Dorsolateral prefrontal cortex (tissue), 120 donors: ENCODE measurements at regions of chr16 and their contacts with region 1.

Region 1: GRCh38 chr16:87874639-87875465 is 5.5 kb upstream of the SLC7A5 start:
- DNase-seq: no peak
- H3K4me3 ChIP-seq: no peak overlapping the region
- H3K27ac ChIP-seq: no peak overlapping the region
- H3K27me3 ChIP-seq: peaks cover 0 to 11% (median 0%) of the 10 kb centered on the region in 45 donors
- CTCF ChIP-seq: no peak

Region 2: DNA sequence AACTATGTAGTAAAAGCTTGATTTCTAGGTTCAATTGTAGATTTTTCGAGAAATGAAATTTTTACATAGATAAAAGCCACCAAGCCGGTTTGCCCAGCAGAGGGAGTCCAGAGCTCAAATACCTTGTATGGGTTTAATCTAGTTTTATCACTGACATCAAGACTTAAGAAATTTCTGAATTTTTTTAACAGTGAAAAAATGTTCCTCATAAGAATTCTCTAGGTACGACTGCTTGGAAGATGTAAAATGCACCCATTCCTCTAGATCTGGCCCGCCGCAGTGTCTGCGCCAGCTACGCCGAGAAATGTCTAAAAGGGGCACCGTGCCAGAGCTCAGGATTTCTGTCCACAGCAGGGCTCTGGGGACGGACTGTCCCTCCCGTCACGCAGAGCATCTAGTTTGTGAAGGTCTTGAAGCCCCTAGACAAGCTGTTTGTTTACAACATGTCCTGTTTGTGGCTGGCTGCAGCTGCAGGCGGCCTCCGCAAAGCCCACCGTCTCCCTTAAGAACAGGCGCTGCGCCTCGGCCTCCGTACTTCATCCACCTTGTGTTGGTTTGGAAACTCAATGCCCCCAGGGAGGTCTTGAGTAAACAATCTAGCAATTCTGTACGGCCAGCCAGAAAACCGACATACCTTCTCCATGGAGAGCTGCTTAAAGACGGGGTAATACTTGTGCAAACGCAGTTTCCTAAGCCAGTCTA is 457.9 kb before region 1 on chr16:
- intact Hi-C with region 1: no loop called
- DNase-seq: peak in 5 of 10 donors; percentile 27 to 66 (median 61)
- H3K4me3 ChIP-seq: no peak overlapping the region
- H3K27ac ChIP-seq: peak overlapping the region in 10 of 59 donors; percentile 2 to 82 (median 47)
- H3K27me3 ChIP-seq: no peaks in the 10 kb centered on the region
- CTCF ChIP-seq: peak; percentile 47 to 85 (median 73)

Region 3: GRCh38 chr16:87608400-87608985 is 266.4 kb before region 1 on chr16:
- intact Hi-C with region 1: no loop called
- DNase-seq: no peak
- H3K4me3 ChIP-seq: peak overlapping the region in 31 of 59 donors; percentile 2 to 73 (median 63)
- H3K27ac ChIP-seq: peak overlapping the region in 7 of 59 donors; percentile 1 to 69 (median 29)
- H3K27me3 ChIP-seq: peaks cover 0 to 31% (median 17%) of the 10 kb centered on the region in 45 donors
- CTCF ChIP-seq: no peak

Region 4: GRCh38 chr16:87778830-87779579 is 95.8 kb before region 1 on chr16:
- intact Hi-C with region 1: loop called (anchors 1 kb)
- DNase-seq: peak; percentile 83 to 92 (median 90)
- H3K4me3 ChIP-seq: peak overlapping the region in 16 of 59 donors; percentile 11 to 51 (median 26)
- H3K27ac ChIP-seq: peak overlapping the region in 51 of 59 donors; percentile 5 to 89 (median 58)
- H3K27me3 ChIP-seq: peaks cover 0 to 6% (median 0%) of the 10 kb centered on the region in 45 donors
- CTCF ChIP-seq: peak; percentile 88 to 100 (median 99)

Region 5: GRCh38 chr16:87853411-87854052 is 21.3 kb before region 1 on chr16:
- intact Hi-C with region 1: loop called in 1 of 2 experiments (anchors 2 kb)
- DNase-seq: peak; percentile 68 to 95 (median 89)
- H3K4me3 ChIP-seq: peak overlapping the region in 57 of 59 donors; percentile 10 to 73 (median 38)
- H3K27ac ChIP-seq: peak overlapping the region in 52 of 59 donors; percentile 1 to 90 (median 76)
- H3K27me3 ChIP-seq: peaks cover 0 to 3% (median 0%) of the 10 kb centered on the region in 45 donors
- CTCF ChIP-seq: peak in 3 of 56 donors; percentile 6 to 17 (median 16)